A673 (cell line): ENCODE measurements at regions of chr4 and their contacts with region 1.

Region 1: DNA sequence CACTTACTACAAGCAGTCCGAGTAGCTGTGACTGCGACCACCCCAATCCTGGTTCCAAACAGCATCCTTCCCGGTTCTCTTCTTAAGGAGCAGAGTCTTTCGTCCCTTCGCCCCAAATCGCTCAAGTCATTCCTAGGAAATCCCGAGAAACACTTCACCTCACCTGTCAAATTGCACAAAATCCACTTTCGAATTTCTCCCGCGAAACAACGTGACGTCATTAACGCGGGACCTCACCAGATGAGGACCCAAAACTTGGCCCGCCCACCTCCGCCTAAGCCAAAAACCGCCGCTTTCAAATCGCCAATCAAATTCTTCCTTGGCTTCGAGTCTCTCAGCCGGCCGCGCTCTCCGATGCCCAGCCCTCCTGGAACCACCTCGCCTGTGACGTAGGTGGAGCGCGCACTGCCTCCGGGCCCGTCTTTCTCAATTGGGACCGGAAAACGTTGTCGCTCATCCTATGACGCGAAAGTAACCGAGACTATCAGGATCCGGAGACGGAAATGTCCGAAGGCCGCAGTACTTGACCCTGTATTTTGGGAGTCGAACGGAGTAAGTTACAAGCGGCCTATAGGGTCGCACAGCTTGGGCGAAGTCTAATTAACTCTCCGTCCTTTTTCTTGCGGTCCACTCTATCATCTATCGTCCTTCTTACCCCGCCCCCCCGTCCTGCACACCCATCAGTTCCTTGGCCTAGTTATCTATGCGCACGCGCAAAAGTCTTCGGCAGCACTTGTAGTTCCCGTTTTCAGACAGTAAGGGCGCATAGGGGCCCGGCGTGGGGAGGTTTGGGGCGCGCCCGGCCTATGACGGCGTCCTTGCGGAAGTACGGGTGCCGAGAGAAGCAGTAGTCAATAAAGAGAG is at the starts of genes LARP7 and ZGRF1:
- DNase-seq: peak; percentile 99
- H3K4me3 ChIP-seq: peak within 1 kb of the TSS; percentile 71
- H3K27ac ChIP-seq: peak within 1 kb of the TSS; percentile 93
- H3K4me1 ChIP-seq: peaks cover 9% of the 10 kb centered on the region
- H3K27me3 ChIP-seq: no peaks in the 10 kb centered on the region
- CTCF ChIP-seq: peak; percentile 95
- total RNA-seq, gene LARP7: 40.6 and 40.8 TPM in 2 replicates
- total RNA-seq, gene ZGRF1: 31.4 and 37.5 TPM in 2 replicates

Region 2: DNA sequence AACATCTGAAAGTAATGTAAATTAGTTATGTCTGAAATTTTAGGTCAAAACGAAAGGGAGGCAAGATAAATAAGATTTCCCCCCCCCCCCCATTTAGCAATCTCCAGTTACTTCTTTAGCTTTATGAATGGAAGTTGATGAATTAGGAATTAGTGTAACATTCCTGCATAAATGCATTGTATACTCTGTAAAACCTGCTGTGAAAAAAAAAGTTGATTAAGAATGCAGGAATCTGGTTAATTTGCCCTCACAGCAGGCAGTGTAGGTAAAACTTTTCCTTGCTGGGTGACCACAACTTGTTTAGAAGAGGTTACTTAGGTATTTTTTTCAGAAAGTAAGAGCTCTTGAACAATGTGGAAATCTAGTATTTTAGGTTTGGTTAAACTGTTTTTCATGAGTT is 15.3 kb after region 1 on chr4:
- CTCF ChIA-PET with region 1: no interaction called
- POLR2A ChIA-PET with region 1: no interaction called
- intact Hi-C with region 1: no loop called
- DNase-seq: no peak
- H3K4me3 ChIP-seq: no peak overlapping the region
- H3K27ac ChIP-seq: no peak overlapping the region
- H3K4me1 ChIP-seq: peaks cover 10% of the 10 kb centered on the region
- H3K27me3 ChIP-seq: no peaks in the 10 kb centered on the region
- CTCF ChIP-seq: no peak

Region 3: DNA sequence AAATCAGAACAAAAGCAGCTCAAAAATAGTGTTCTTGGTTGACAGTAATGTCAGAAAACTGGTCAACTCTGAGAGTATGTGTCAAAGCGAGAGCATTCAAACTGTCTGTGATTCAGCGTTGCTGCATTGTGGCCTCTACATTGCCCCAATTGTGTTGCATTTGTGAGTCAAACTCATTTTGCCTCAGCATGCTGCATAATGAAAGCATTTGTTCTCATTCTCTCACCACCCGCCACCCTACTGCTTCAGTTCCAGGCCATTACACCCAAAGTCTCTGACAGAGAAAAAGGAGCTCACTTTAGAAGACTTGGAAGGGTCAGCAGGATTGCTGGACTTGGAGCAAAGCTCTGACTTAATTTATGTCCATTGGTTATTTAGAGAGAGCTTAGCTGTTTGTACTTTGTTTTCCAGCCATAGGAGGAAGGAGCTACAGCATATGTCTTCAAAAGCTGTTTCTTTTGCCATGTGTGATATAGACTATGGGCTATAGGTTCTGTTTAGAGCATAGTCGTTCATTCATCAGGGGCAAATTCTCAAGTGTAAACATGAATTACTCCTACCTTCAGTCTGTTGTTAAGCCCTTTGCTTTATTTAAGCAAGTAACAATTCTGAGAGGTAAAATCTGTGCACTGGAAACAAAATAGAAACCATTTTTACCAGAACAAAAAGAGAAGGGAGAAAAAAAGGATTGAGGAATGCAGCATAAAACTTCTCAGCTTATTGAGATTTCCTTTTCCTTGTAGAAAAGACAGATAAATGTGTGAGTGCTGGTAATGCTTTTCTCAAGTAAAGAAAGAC is 259.1 kb after region 1 on chr4:
- CTCF ChIA-PET with region 1: no interaction called
- POLR2A ChIA-PET with region 1: no interaction called
- intact Hi-C with region 1: no loop called
- DNase-seq: no peak
- H3K4me3 ChIP-seq: no peak overlapping the region
- H3K27ac ChIP-seq: no peak overlapping the region
- H3K4me1 ChIP-seq: peaks cover 10% of the 10 kb centered on the region
- H3K27me3 ChIP-seq: no peaks in the 10 kb centered on the region
- CTCF ChIP-seq: no peak

Region 4: GRCh38 chr4:112951362-112952312 is 314.7 kb after region 1 on chr4:
- CTCF ChIA-PET with region 1: no interaction called
- POLR2A ChIA-PET with region 1: no interaction called
- intact Hi-C with region 1: loop called (anchors 5 kb)
- DNase-seq: peak; percentile 60
- H3K4me3 ChIP-seq: no peak overlapping the region
- H3K27ac ChIP-seq: no peak overlapping the region
- H3K4me1 ChIP-seq: peaks cover 62% of the 10 kb centered on the region
- H3K27me3 ChIP-seq: no peaks in the 10 kb centered on the region
- CTCF ChIP-seq: peak; percentile 72

Region 5: GRCh38 chr4:113094802-113095201 is 457.9 kb after region 1 on chr4:
- CTCF ChIA-PET with region 1: no interaction called
- POLR2A ChIA-PET with region 1: no interaction called
- intact Hi-C with region 1: loop called (anchors 10 kb)
- DNase-seq: peak; percentile 27
- H3K4me3 ChIP-seq: no peak overlapping the region
- H3K27ac ChIP-seq: no peak overlapping the region
- H3K4me1 ChIP-seq: no peaks in the 10 kb centered on the region
- H3K27me3 ChIP-seq: no peaks in the 10 kb centered on the region
- CTCF ChIP-seq: peak; percentile 81